Psoas muscle (tissue), 8 donors: ENCODE measurements at regions of chr3 and their contacts with region 1.

Region 1: GRCh38 chr3:49093853-49094767 is at the start of gene QRICH1:
- DNase-seq: peak; percentile 97 to 99
- ATAC-seq: peak; percentile 91 to 93 (median 92)
- H3K4me3 ChIP-seq: peak within 1 kb of the TSS; percentile 95
- H3K27ac ChIP-seq: peak within 1 kb of the TSS; percentile 89
- H3K4me1 ChIP-seq: peaks cover 42% of the 10 kb centered on the region
- H3K27me3 ChIP-seq: no peaks in the 10 kb centered on the region
- CTCF ChIP-seq: peak; percentile 55
- total RNA-seq, gene QRICH1: 52.8 to 83.9 (median 71.1) TPM

Region 2: GRCh38 chr3:48989796-48990635 is 104.1 kb before region 1 on chr3 and contains the start of gene P4HTM:
- intact Hi-C with region 1: loop called in 1 of 2 experiments (anchors 5 kb)
- DNase-seq: peak; percentile 91 to 92
- ATAC-seq: peak; percentile 78 to 87 (median 86)
- H3K4me3 ChIP-seq: peak within 1 kb of the TSS; percentile 94
- H3K27ac ChIP-seq: peak within 1 kb of the TSS; percentile 78
- H3K4me1 ChIP-seq: peaks cover 25% of the 10 kb centered on the region
- H3K27me3 ChIP-seq: no peaks in the 10 kb centered on the region
- CTCF ChIP-seq: peak; percentile 25
- total RNA-seq, gene P4HTM: 11.1 to 17.0 (median 13.7) TPM

Region 3: DNA sequence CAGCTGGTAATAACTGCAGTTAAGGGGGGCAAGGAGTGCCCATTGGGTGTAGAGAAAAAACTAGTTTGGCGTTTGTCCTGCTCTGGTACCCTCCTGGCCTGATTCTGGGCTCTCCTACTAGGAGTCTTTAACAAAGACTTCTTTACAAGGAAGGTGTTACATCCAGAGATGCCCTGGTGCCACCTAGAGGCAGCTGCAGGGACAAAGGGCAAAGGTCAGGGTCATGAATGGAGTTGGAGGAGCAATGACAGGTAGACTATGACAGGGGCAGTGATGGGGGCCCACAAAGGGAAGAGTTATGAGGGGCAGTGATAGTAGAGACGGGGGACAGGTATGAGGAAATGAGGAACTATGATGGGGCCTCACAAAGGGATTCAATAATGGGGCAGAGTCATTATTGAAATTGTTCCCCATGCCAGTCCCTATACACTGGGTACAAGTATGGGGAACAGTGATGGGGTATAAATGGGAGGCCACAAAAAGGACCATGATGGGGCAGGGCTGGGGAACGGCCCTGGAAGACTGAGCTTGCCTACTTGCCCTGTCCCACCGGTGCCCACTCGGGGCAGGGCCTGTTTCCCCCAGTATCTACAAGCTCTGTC is 64.1 kb after region 1 on chr3:
- intact Hi-C with region 1: no loop called
- DNase-seq: peak in 1 of 2 donors; percentile 63
- ATAC-seq: peak in 2 of 4 donors; percentile 51 to 67
- H3K4me3 ChIP-seq: no peak overlapping the region
- H3K27ac ChIP-seq: no peak overlapping the region
- H3K4me1 ChIP-seq: peaks cover 3% of the 10 kb centered on the region
- H3K27me3 ChIP-seq: no peaks in the 10 kb centered on the region
- CTCF ChIP-seq: no peak

Region 4: GRCh38 chr3:51004235-51004634 is 1910.1 kb after region 1 on chr3:
- intact Hi-C with region 1: no loop called
- DNase-seq: no peak
- ATAC-seq: no peak
- H3K4me3 ChIP-seq: no peak overlapping the region
- H3K27ac ChIP-seq: no peak overlapping the region
- H3K4me1 ChIP-seq: no peaks in the 10 kb centered on the region
- H3K27me3 ChIP-seq: no peaks in the 10 kb centered on the region
- CTCF ChIP-seq: no peak